Activated T-helper 1 cell treated with anti-CD3 and anti-CD28 coated beads, Interleukin-12 subunit alpha, Interleukin-12 subunit beta, Interleukin-2, Interleukin-4 antibody, amounts not matched to agents 30 ng/mL and 10 ng/mL and 1 ng/mL, durations not matched to agents 14 hours and 24 hours and 36 hours (primary cell): ENCODE measurements at regions of chr2 and their contacts with region 1.

Region 1: GRCh38 chr2:172588931-172589330 is 33.0 kb downstream of the PDK1 start:
- DNase-seq: no peak
- H3K4me3 Mint-ChIP-seq: no peak overlapping the region
- H3K27ac Mint-ChIP-seq: peak overlapping the region; percentile 16
- H3K4me1 Mint-ChIP-seq: peaks cover 26% of the 10 kb centered on the region
- H3K27me3 Mint-ChIP-seq: no peaks in the 10 kb centered on the region

Region 2: DNA sequence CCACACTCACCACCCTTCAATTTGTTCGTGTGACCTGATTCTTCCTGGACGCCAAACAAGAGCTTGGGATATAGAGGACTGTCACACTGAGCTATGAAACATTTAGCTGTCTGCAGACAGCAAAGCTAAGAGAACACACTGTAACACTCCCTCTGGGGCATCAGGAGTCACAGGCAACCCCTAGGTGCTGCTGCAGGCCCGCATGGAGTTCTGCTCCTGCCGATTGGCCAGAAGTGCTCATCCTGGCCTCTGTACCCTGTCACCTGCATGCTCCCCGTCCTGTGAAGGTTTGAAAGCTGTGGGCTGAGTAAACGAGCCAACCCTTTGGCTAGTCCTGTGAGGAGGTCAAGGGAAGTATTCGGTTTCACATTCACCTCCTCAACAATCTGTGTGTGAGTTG is 40.7 kb after region 1 on chr2:
- intact Hi-C with region 1: no loop called
- DNase-seq: no peak
- H3K4me3 Mint-ChIP-seq: no peak overlapping the region
- H3K27ac Mint-ChIP-seq: no peak overlapping the region
- H3K4me1 Mint-ChIP-seq: no peaks in the 10 kb centered on the region
- H3K27me3 Mint-ChIP-seq: no peaks in the 10 kb centered on the region

Region 3: GRCh38 chr2:172710584-172711024 is 121.7 kb after region 1 on chr2:
- intact Hi-C with region 1: loop called (anchors 1 kb)
- DNase-seq: no peak
- H3K4me3 Mint-ChIP-seq: no peak overlapping the region
- H3K27ac Mint-ChIP-seq: no peak overlapping the region
- H3K4me1 Mint-ChIP-seq: no peaks in the 10 kb centered on the region
- H3K27me3 Mint-ChIP-seq: peaks cover 22% of the 10 kb centered on the region